ENCODE measurements at regions of chr3 and their contacts with region 1.

Region 1: DNA sequence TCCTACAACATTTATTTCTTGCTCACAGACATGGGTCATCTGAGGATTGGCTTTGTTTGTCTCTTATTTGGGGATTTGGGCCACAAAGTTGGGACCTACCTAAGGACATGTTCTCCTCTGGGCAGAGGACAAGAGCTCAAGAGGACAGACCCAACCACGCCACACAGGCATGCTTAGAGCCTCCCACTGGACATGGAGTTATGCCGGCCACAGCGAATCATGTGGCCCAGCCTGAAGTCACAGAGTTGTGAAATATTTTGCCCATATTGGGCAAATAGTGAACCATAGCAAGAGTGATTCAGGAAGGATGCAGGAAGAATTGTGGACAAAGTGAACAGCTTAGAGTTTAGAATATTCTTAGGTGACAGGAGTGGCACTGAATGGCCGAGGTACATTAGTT is 9.9 kb downstream of the TRAK1 start:
- DNase-seq: peak; percentile 60
- H3K4me3 ChIP-seq: no peak overlapping the region
- CTCF ChIP-seq: no peak

Region 2: DNA sequence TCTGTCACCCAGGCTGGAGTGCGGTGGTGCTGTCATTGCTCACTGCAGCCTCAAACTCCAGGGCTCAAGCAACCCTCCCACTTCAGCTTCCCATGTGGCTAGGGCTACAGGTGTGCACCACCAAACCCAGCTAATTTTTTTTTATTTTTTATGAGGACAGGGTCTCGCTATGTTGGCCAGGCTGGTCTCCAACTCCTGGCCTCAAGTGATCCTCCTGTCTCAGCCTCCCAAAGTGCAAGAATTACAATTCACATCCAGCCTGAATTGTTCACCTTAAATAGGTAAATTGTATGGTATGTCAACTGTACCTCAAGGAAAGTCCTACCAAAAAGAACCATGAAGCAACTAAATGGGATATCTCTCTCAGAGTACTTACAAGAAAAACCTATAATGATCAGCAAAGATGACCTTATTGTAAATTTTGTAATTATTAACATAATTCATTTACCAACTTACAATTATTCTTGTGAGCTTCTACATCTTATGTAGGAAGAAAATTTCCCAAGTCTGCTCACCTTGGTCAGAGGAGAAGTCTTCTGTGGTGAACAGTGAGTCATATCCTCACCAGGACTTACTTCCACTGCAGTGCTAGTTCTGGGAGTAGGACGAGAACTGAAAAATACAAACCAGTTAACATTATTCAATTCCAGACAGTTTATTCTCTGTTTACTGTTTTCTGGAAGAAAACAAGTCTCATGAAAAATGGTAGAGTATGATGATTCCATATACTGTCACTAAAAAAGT is 193.5 kb before region 1 on chr3:
- CTCF ChIA-PET with region 1: interaction called, 38 read pairs
- POLR2A ChIA-PET with region 1: no interaction called
- DNase-seq: peak; percentile 5
- H3K4me3 ChIP-seq: no peak overlapping the region
- CTCF ChIP-seq: no peak

Region 3: DNA sequence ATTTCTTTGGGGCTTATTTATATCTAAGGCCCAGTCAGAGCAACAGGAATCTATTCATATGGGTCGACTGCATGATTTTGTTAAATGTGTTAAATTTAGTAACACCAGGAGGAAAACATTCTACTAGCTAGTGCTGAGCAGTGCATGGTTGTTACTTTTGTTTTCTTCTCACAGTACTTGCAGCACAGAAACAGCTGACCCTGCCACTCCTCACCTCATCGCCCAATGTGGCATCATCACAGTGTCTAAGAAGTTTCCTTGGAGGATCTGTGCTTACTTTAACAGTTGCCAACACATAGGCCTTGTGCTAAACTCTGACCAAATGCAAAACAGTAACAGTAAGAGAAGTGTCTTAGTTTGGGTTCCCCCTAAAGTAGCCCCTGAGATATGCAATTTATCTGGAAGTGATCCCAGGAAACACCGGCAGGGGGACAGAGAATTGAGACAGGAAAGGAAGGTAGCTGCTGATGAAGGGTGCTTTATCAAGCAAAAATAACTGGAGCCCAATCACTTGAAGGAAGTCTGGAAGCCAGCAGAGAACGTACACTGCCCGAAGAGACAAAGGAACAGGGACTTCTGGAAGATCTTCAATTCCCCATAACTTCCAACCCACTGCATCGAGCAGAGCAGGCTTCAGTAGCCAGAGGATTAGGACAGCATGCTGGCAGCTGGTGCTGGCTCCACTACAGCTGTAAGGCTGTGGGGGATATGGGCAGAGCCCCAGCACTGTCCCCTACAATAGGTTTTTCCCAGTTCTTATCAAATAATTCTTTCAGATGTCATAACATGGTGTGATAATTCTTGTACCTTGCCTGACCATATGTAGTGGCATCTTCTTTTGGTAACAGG is 103.1 kb before region 1 on chr3:
- CTCF ChIA-PET with region 1: interaction called, 52 read pairs
- POLR2A ChIA-PET with region 1: interaction called, 3 read pairs
- DNase-seq: no peak
- H3K4me3 ChIP-seq: no peak overlapping the region
- CTCF ChIP-seq: peak; percentile 26

Region 4: DNA sequence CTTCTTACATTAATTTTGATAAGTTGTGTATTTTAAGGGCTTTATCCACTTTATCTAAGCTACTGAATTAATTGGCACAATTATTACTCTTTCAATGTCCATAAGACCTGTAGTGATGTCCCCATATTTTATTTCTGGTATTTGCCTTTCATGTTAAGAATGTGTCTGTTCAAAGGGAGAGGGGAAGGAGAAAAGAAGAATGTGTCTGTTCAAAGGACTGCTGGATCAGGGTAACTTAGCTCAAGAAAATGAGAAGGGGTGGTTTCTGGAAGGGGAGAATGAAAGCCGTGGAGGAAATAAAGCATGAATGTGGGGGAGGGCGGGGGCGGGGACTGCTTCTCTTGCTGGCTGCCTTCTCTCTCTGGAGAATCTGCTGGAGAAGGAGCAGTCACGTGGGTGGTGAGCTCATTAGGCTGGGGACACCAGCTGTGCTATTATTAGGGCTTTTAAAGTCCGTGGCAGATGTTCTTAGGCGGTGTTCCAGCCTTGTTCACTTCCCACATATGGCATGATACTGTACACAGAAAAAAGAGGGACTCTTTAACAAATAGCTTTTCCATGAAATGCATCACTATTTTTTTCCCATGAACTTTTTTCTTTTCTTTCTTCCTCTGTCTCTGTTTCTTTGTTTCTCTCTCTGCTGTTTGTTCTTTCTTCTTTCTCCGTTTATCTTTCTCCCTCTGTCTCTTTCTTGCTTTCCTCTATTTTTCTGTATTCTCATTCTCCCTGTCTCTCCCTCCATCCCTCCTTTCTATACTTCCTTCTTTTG is 75.5 kb before region 1 on chr3:
- CTCF ChIA-PET with region 1: interaction called, 55 read pairs
- POLR2A ChIA-PET with region 1: no interaction called
- DNase-seq: peak; percentile 90
- H3K4me3 ChIP-seq: peak overlapping the region; percentile 31
- CTCF ChIP-seq: no peak

Region 5: GRCh38 chr3:42052484-42053351 is 48.3 kb before region 1 on chr3:
- CTCF ChIA-PET with region 1: interaction called, 16 read pairs
- POLR2A ChIA-PET with region 1: no interaction called
- DNase-seq: no peak
- H3K4me3 ChIP-seq: no peak overlapping the region
- CTCF ChIP-seq: no peak

Region 6: GRCh38 chr3:42118762-42119361 is 17.8 kb after region 1 on chr3:
- CTCF ChIA-PET with region 1: interaction called, 44 read pairs
- POLR2A ChIA-PET with region 1: interaction called, 3 read pairs
- DNase-seq: no peak
- H3K4me3 ChIP-seq: no peak overlapping the region
- CTCF ChIP-seq: peak; percentile 36

Region 7: DNA sequence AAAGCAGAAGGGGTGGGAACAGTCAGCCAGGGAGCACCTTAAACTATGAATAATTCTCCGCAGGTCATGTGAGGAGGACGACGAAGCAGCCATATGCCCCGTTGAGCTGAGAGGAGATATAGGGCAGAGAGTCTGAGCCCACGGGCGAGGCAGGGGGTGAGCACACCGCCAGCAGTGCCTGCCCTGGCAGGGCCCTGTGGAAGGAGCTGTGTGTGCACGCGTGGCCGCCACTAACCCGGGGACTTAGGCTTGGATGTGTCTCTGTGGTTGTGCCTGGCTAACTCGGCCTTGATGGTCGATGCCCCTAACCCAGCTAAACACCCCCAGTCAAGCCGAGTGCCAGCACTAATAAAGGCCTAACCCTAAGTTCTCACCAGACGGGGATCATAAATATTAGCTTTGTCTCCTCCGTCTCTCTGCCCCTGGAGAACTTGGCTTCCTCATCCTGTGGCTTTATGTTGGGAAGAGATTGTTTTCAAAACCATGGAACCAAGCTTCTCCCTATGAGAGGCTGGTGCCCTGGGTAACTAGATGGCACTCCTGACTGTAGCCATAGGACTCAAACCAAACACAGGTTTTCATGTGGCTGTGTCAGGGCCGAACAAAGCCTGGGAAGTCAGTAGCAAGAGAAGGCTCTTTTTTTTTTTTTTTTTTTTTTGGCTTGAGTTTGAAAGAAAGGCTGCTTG is 119.5 kb after region 1 on chr3:
- CTCF ChIA-PET with region 1: no interaction called
- POLR2A ChIA-PET with region 1: no interaction called
- DNase-seq: no peak
- H3K4me3 ChIP-seq: no peak overlapping the region
- CTCF ChIP-seq: no peak

Region 8: GRCh38 chr3:42264399-42265058 is 163.5 kb after region 1 on chr3:
- CTCF ChIA-PET with region 1: no interaction called
- POLR2A ChIA-PET with region 1: no interaction called
- DNase-seq: no peak
- H3K4me3 ChIP-seq: no peak overlapping the region
- CTCF ChIP-seq: no peak

Region 9: DNA sequence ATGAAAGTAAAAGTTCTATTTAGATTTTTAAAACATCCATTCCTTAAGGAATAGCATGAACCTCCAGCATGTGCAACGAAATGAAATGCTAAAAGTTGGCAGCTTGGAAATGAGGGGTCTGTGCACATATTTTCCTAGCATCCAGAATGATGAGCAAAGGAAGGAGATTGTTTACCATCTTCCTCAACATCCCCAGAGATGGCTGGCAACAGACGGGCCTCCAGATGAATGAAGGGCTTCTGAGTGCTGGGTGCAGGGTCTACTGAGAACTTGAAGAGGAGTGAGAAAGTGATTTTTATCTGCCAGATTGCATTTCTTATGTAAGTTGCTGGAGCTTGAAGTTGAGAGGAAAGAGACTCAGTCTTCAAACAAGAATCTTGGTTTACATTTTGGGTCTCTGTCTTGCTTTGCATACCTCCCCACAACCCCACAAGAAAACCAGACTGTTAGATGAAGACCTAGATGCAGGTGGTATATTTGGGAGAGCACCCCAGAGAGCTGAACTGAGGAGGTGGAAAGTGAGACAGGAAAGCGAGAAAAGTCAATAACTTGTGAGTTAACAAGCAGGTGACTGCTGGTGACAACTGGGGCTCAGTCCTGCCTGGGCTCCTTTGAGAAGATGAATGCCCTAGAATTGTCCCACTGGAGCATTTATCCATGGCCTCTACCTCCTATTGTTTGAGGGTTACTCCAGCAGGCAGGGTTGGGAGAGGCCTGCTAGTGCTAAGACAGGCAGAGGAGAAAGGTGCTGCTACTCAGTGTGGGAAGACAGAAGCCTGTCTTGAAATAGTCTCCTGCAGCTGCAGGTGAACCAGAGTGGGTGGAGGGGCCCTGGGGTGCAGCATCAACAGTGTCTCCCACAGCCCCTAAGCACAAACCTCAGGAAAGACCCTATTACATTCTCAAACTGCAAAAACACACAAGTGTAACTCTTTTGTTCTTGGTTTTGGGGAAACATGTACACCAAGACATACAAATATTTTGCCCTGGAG is 175.4 kb after region 1 on chr3:
- CTCF ChIA-PET with region 1: no interaction called
- POLR2A ChIA-PET with region 1: no interaction called
- DNase-seq: no peak
- H3K4me3 ChIP-seq: no peak overlapping the region
- CTCF ChIP-seq: no peak

Region 10: GRCh38 chr3:42394579-42395288 is 293.7 kb after region 1 on chr3:
- CTCF ChIA-PET with region 1: no interaction called
- POLR2A ChIA-PET with region 1: no interaction called
- DNase-seq: no peak
- H3K4me3 ChIP-seq: no peak overlapping the region
- CTCF ChIP-seq: no peak